A673 (cell line): ENCODE measurements at regions of chr3 and their contacts with region 1.

Region 1: DNA sequence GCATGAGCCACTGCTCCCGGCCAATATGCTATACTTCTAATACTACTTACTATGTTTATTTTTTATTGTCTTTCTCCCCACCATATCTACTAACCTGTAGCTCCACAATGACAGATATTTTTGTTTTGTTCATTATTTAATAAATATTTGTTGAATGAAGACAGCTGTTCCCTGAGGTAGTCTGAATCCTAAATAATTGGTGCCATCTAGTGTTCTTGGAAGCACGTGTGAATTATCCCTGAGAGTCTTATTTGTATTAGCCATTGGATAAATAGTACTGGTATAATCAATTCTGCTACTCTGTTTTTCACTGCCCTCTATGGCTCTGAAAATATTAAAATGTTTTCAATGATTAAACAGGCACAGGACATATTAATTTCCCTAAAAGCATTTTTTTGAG is 5.6 kb upstream of the APPL1 start:
- DNase-seq: peak; percentile 7
- H3K4me3 ChIP-seq: no peak overlapping the region
- H3K27ac ChIP-seq: no peak overlapping the region
- H3K4me1 ChIP-seq: peaks cover 3% of the 10 kb centered on the region
- H3K27me3 ChIP-seq: no peaks in the 10 kb centered on the region
- CTCF ChIP-seq: peak; percentile 43

Region 2: GRCh38 chr3:56997675-56998074 is 224.2 kb before region 1 on chr3:
- CTCF ChIA-PET with region 1: no interaction called
- POLR2A ChIA-PET with region 1: no interaction called
- intact Hi-C with region 1: loop called (anchors 5 kb)
- DNase-seq: no peak
- H3K4me3 ChIP-seq: no peak overlapping the region
- H3K27ac ChIP-seq: no peak overlapping the region
- H3K4me1 ChIP-seq: no peaks in the 10 kb centered on the region
- H3K27me3 ChIP-seq: no peaks in the 10 kb centered on the region
- CTCF ChIP-seq: no peak

Region 3: DNA sequence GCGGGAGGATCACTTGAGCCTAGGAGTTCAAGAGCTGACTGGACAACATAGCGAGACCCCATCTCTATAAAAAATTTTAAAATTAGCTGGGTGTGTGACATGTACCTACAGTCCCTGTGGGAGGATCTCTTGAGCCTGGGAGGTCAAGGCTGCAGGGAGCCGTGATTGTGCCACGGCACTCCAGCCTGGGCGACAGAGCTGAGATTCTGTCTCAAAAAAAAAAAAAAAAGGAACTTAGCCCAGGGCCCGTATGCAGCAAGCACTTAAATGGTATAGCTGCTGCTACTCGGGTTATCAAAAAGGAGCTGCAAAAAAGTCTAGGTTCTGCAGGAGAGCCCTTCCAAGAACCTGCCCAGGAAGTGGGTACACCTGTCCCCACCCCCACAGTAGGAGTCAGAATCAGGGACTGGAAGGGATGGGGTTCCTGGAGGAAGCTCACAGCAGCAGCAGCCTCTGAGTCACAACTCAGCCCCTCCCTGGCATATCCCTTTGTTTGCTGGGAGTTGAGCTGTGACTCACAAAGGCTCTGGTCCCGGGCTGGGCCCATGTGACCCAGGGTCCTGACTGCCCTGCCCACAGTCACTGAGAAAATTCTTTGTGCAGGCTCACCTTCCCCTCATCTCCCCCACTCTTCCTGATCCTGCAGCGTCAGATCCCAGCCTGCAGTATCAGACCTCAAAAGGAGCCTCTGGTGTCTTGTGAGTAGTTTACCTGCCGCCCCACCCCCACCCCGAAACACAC is 161.6 kb before region 1 on chr3 and contains the start of gene SPATA12:
- CTCF ChIA-PET with region 1: no interaction called
- POLR2A ChIA-PET with region 1: interaction called, 14 read pairs
- intact Hi-C with region 1: no loop called
- DNase-seq: peak; percentile 18
- H3K4me3 ChIP-seq: no peak within 1 kb of the TSS
- H3K27ac ChIP-seq: no peak within 1 kb of the TSS
- H3K4me1 ChIP-seq: no peaks in the 10 kb centered on the region
- H3K27me3 ChIP-seq: no peaks in the 10 kb centered on the region
- CTCF ChIP-seq: no peak
- total RNA-seq, gene SPATA12: not detected in 2 replicates

Region 4: DNA sequence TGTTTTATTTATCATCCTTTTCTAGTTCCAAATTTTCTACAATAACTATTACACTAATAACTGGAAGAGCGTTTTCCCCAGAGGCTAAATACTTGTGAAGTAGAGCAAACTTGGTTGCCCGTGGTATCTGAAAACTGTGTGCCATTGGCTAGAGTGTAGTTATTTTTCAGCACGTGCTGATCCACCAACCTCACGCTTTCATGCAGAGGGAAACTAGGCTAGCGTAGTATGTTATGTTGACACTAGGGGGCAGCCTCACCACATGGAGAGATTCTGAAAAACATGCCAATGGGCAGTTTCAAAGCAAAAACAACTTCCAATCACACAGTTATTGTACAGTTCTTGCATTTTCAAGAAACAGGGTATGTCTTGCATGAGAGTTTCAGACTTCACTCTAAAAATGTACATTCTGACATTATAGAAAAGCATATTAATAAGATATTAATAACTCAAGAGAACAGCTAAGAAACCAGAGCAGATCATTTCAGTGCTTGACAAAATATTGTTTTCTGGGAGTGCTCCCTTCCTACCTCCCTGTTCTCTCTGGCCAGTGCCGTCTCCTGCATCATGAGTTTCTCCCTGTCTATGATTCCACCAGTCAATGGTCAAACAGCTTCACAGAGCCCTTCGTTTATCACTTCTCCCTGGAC is 121.7 kb before region 1 on chr3:
- CTCF ChIA-PET with region 1: interaction called, 3 read pairs
- POLR2A ChIA-PET with region 1: no interaction called
- intact Hi-C with region 1: loop called (anchors 5 kb)
- DNase-seq: peak; percentile 68
- H3K4me3 ChIP-seq: no peak overlapping the region
- H3K27ac ChIP-seq: no peak overlapping the region
- H3K4me1 ChIP-seq: no peaks in the 10 kb centered on the region
- H3K27me3 ChIP-seq: no peaks in the 10 kb centered on the region
- CTCF ChIP-seq: peak; percentile 68

Region 5: DNA sequence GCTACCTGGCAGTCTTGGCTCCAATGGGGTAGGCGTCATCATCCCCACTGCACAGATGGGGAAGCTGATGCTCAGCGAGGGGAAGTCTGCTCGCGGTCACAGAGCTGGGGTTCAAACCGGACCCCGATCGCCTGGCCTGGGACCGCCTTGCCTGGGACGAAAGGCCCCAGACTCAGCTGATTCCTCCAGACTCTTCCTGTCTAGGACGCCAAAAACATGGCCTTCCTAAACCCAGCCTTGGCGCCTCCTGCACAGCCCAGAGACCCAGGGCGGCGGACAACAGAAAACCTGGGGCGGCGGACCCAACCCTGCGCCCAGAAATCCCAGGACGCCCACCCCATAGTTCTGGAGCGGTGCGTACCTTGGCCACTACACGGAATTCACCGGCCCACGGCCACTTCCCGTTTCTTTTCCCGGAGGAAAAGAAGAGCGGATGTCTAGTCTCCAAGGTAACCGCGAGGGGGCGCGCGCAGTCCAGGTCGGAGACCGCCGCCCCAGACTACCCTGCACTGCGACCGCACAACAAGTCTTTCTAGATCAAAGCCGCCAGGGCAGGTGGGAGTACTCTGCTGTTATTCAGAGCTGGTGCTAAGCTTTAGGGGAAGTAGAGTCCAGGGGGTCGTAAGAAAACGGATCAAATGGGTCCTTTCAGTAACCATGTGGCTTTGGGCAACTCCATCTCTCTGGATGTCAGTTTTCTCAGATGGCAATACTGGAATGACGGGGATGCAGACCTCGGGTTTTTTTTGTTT is 51.8 kb before region 1 on chr3:
- CTCF ChIA-PET with region 1: no interaction called
- POLR2A ChIA-PET with region 1: no interaction called
- intact Hi-C with region 1: loop called (anchors 5 kb)
- DNase-seq: peak; percentile 54
- H3K4me3 ChIP-seq: peak overlapping the region; percentile 19
- H3K27ac ChIP-seq: no peak overlapping the region
- H3K4me1 ChIP-seq: no peaks in the 10 kb centered on the region
- H3K27me3 ChIP-seq: no peaks in the 10 kb centered on the region
- CTCF ChIP-seq: peak; percentile 79